Common myeloid progenitor, CD34-positive (primary cell): ENCODE measurements at regions of chr12 and their contacts with region 1.

Region 1: GRCh38 chr12:121432740-121433480 is 33.0 kb downstream of the RNF34 start:
- DNase-seq: peak in 2 of 3 donors; percentile 70 to 84
- H3K4me3 ChIP-seq: no peak overlapping the region
- H3K27ac ChIP-seq: peak overlapping the region in 1 of 2 experiments; percentile 31
- H3K4me1 ChIP-seq: peaks cover 0 to 15% (median 11%) of the 10 kb centered on the region in 4 experiments
- H3K27me3 ChIP-seq: no peaks in the 10 kb centered on the region

Region 2: DNA sequence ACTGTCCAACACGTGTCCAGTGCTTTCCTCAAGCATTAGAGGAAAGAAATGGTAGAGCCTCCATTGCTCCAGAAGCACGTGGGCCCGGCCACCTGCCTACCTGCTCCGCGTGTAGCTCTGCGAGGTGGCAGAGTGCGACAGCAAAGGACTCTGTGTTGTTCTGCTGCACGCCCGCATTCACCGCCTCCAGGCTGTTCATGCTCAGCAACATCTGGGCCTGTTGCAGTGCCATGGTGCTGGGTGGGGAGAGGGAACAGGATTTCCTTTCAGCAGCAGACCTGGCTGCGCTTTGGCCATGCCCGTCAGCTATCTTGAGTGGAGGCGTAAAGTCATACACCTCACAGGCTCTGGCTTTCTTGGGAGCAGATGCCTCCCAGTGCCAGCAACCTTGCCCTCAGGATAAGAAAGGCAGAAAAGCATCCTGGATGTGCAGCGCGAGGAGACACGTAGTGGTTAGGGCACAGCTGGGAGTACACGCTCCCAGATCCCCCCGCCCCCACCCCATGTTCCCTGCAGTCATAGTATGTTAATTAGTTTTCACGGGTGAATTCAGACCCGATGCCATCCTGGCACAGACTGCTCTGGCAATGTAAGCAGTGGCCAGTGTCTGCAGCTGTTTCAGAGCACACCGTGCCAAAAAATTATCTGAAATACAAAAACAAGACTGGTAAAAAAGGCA is 105.8 kb before region 1 on chr12:
- CTCF ChIA-PET with region 1: no interaction called
- POLR2A ChIA-PET with region 1: no interaction called
- DNase-seq: peak in 1 of 3 donors; percentile 40
- H3K4me3 ChIP-seq: peak overlapping the region in 2 of 7 experiments; percentile 38 to 43
- H3K27ac ChIP-seq: peak overlapping the region; percentile 35 to 78
- H3K4me1 ChIP-seq: peaks cover 10 to 34% (median 29%) of the 10 kb centered on the region in 4 experiments
- H3K27me3 ChIP-seq: no peaks in the 10 kb centered on the region

Region 3: DNA sequence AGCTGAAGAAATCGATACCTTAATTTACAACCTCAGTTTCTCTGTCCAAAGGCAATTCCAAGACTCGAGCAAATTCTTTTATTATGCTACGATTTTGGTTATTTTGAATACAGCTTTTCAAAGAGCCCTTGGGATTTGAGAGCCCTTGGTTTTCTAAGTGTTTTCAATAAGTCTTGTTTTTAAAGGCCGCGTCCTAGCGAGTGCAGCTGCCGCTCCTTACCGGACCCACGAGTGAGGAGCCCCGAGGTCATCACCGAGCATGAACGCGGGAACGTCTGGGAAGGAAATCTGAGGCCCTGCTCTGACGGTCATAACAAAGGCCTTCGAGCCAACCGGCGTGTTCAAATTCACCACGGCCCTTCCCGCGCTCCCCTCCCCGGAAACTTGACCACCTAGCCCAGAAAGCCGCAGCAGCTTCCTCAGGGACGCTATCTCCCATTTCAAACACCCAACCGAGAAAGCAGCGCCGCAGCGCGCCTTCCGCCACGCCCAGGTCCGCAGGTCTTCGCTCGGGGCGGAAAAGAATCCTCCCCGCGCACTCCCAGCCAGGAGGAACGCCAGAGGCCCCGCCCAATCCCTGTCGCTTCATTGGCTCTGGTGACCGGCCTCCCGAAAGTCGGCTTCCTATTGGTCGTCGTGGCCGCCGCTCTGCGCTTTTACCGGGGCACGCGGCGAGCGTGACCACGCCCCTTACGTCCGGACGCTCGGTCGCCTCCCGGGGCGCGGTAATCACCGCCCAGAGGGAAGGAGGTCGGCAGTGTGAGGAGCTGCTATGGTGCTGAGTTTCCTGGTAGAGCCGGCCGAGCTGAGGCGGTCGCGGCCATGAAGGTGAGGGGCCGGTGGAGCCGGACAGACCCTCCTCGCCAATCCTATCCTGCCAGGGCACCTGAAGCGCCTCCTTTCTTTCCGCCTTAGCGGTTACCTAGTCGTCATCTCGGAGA is 33.2 kb before region 1 on chr12 and contains the start of gene RNF34:
- CTCF ChIA-PET with region 1: interaction called, 11 read pairs
- POLR2A ChIA-PET with region 1: no interaction called
- DNase-seq: peak; percentile 97 to 99 (median 98)
- H3K4me3 ChIP-seq: peak within 1 kb of the TSS; percentile 73 to 97 (median 88)
- H3K27ac ChIP-seq: peak within 1 kb of the TSS; percentile 83 to 87
- H3K4me1 ChIP-seq: peaks cover 18 to 28% (median 18%) of the 10 kb centered on the region in 4 experiments
- H3K27me3 ChIP-seq: no peaks in the 10 kb centered on the region